Naive thymus-derived CD4-positive, alpha-beta T cell (primary cell): ENCODE measurements at regions of chr17 and their contacts with region 1.

Region 1: GRCh38 chr17:59702304-59702703 is 4.9 kb downstream of the PTRH2 start:
- DNase-seq: no peak
- ATAC-seq: no peak
- H3K4me3 ChIP-seq: no peak overlapping the region
- H3K4me3 Mint-ChIP-seq: no peak overlapping the region
- H3K27ac ChIP-seq: no peak overlapping the region
- H3K27ac Mint-ChIP-seq: peak overlapping the region in 5 of 9 donors; percentile 3 to 55 (median 6)
- H3K4me1 ChIP-seq: peaks cover 18 to 28% of the 10 kb centered on the region in 2 donors
- H3K4me1 Mint-ChIP-seq: peaks cover 47 to 90% (median 76%) of the 10 kb centered on the region in 7 donors
- H3K27me3 ChIP-seq: no peaks in the 10 kb centered on the region
- H3K27me3 Mint-ChIP-seq: no peaks in the 10 kb centered on the region

Region 2: DNA sequence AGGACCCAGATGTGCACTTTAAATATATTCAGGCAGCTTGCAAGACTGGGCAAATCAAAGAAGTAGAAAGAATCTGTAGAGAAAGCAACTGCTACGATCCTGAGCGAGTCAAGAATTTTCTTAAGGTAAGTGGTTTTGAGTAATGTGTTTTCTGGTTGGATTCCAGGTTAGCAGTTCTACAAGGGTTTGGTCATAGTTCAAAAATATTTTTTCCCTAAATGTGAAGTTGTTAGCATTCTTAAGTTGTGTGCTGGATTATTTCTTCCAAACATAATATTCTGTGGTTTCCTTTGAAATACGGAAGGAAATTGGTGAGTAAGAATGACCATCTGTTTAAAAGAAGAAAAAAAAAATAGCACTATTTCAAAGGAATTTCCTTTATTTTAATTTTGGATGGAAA is 33.5 kb before region 1 on chr17:
- CTCF ChIA-PET with region 1: interaction called, 3 read pairs
- POLR2A ChIA-PET with region 1: no interaction called
- intact Hi-C with region 1: loop called in 1 of 2 experiments (anchors 5 kb)
- DNase-seq: no peak
- ATAC-seq: no peak
- H3K4me3 ChIP-seq: no peak overlapping the region
- H3K4me3 Mint-ChIP-seq: no peak overlapping the region
- H3K27ac ChIP-seq: no peak overlapping the region
- H3K27ac Mint-ChIP-seq: peak overlapping the region in 7 of 9 donors; percentile 10 to 68 (median 43)
- H3K4me1 ChIP-seq: no peaks in the 10 kb centered on the region
- H3K4me1 Mint-ChIP-seq: peaks cover 4 to 28% (median 16%) of the 10 kb centered on the region in 7 donors
- H3K27me3 ChIP-seq: no peaks in the 10 kb centered on the region
- H3K27me3 Mint-ChIP-seq: no peaks in the 10 kb centered on the region

Region 3: GRCh38 chr17:59680314-59680713 is 22.0 kb before region 1 on chr17:
- CTCF ChIA-PET with region 1: no interaction called
- POLR2A ChIA-PET with region 1: no interaction called
- intact Hi-C with region 1: no loop called
- DNase-seq: no peak
- ATAC-seq: no peak
- H3K4me3 ChIP-seq: no peak overlapping the region
- H3K4me3 Mint-ChIP-seq: no peak overlapping the region
- H3K27ac ChIP-seq: no peak overlapping the region
- H3K27ac Mint-ChIP-seq: peak overlapping the region in 1 of 9 donors; percentile 18
- H3K4me1 ChIP-seq: no peaks in the 10 kb centered on the region
- H3K4me1 Mint-ChIP-seq: peaks cover 0 to 4% (median 0%) of the 10 kb centered on the region in 7 donors
- H3K27me3 ChIP-seq: no peaks in the 10 kb centered on the region
- H3K27me3 Mint-ChIP-seq: no peaks in the 10 kb centered on the region